ENCODE measurements at regions of chr10 and their contacts with region 1.

Region 1: DNA sequence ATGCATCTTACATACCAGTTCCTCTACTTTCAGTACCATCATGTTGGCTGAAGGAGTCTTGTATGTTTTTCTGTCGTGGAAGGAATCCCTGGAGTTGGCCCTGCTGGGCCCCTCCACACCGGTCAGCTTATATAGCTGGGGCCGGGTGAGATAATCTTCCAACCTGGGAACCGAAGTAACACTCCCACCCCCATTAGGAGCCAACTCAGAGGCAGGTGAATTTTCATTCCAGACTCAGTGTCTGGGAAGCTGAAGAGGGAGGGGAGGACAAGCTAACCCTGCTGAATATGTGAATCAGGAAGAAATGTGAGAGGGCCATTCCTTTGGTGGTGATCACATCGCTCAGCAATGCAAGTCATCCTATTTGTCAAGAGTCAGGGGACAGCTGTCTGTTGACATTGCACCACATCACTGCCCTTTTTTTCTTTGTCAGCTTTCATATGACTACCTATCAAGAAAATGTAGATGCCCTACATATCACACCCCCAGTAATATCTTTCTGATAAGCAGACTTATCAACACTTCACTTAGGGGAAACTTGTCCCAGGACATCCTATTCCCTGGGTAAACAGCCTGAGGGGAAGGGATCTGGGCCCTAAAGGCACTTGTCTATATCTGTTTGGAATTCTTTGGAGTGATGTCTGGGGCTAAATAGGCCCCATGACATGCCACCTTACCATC is at the start of gene ANKRD1:
- DNase-seq: peak; percentile 99
- ATAC-seq: peak; percentile 99
- H3K4me3 ChIP-seq: peak within 1 kb of the TSS; percentile 49 to 69 (median 52)
- H3K27ac ChIP-seq: peak within 1 kb of the TSS; percentile 70
- H3K4me1 ChIP-seq: peaks cover 50% of the 10 kb centered on the region
- H3K27me3 ChIP-seq: no peaks in the 10 kb centered on the region
- CTCF ChIP-seq: no peak
- EP300 ChIP-seq: peak; percentile 85 to 90
- POLR2A ChIP-seq: no peak
- RAD21 ChIP-seq: no peak
- total RNA-seq, gene ANKRD1: 19.4 and 26.4 TPM in 2 replicates

Region 2: GRCh38 chr10:90969947-90970684 is 49.0 kb after region 1 on chr10:
- CTCF ChIA-PET with region 1: no interaction called
- POLR2A ChIA-PET with region 1: no interaction called
- in situ Hi-C with region 1: no loop called
- intact Hi-C with region 1: loop called (anchors 2 kb)
- DNase-seq: peak; percentile 19
- ATAC-seq: no peak
- H3K4me3 ChIP-seq: no peak overlapping the region
- H3K27ac ChIP-seq: no peak overlapping the region
- H3K4me1 ChIP-seq: peaks cover 40% of the 10 kb centered on the region
- H3K27me3 ChIP-seq: no peaks in the 10 kb centered on the region
- CTCF ChIP-seq: peak; percentile 40
- EP300 ChIP-seq: no peak
- POLR2A ChIP-seq: no peak
- RAD21 ChIP-seq: 0 out of 2 replicates have a peak, but pooled peaks have one; percentile 18

Region 3: DNA sequence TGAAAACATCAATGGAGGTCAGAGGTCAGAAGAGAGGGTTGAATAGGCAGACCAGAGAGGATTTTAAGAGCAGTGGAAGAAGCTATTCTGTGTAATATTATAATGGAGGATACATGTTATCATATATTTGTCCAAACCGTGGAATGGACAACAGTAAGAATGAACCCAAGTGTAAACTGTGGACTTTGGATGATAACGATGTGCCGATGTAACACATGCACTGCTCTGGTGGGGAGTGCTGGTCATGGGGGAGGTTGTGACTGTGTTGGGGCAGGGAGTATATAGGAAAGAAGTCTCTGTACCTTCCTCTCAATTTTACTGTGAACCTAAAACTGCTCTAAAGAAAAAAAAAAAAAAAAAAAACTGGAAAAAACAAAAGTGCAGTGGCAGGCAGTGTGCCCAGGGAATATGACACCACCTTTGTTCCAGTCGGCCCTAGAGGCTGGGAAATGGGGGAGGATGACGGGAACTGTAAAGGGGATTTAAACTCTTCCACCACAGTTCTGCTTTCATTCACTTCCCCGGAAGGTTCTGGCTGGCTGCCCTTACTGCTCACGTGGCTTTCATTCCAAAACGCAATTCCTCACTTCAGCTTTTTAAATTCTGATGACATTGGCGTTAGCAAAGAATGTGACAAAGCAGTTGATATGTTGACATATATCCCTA is 113.5 kb after region 1 on chr10:
- CTCF ChIA-PET with region 1: no interaction called
- POLR2A ChIA-PET with region 1: no interaction called
- in situ Hi-C with region 1: no loop called
- intact Hi-C with region 1: no loop called
- DNase-seq: peak; percentile 9
- ATAC-seq: peak; percentile 61; the same call in 2 of the 3 replicates
- H3K4me3 ChIP-seq: no peak overlapping the region
- H3K27ac ChIP-seq: no peak overlapping the region
- H3K4me1 ChIP-seq: peaks cover 10% of the 10 kb centered on the region
- H3K27me3 ChIP-seq: peaks cover 3 to 4% of the 10 kb centered on the region in 2 experiments; a peak in 2 of 5 replicates
- CTCF ChIP-seq: no peak
- EP300 ChIP-seq: no peak
- POLR2A ChIP-seq: no peak
- RAD21 ChIP-seq: no peak

Region 4: GRCh38 chr10:91220194-91220953 is 299.2 kb after region 1 on chr10 and contains the start of gene PCGF5:
- CTCF ChIA-PET with region 1: no interaction called
- POLR2A ChIA-PET with region 1: interaction called, 4 read pairs
- in situ Hi-C with region 1: no loop called
- intact Hi-C with region 1: loop called (anchors 5 kb)
- DNase-seq: no peak
- ATAC-seq: peak; percentile 94
- H3K4me3 ChIP-seq: peak within 1 kb of the TSS; percentile 90 to 96 (median 90)
- H3K27ac ChIP-seq: peak within 1 kb of the TSS; percentile 100
- H3K4me1 ChIP-seq: peaks cover 78% of the 10 kb centered on the region
- H3K27me3 ChIP-seq: no peaks in the 10 kb centered on the region
- CTCF ChIP-seq: peak; percentile 39; the same call in 1 of the 2 replicates
- EP300 ChIP-seq: no peak
- POLR2A ChIP-seq: peak; percentile 79 to 81
- RAD21 ChIP-seq: peak; percentile 76
- total RNA-seq, gene PCGF5: 61.3 and 74.8 TPM in 2 replicates

Measured in HepG2 (cell line).